GM10248 (cell line): ENCODE measurements at regions of chr1 and their contacts with region 1.

Region 1: GRCh38 chr1:65075123-65075976 is 72.7 kb upstream of the AK4 start:
- DNase-seq: peak; percentile 65
- CTCF ChIP-seq: peak; percentile 76

Region 2: DNA sequence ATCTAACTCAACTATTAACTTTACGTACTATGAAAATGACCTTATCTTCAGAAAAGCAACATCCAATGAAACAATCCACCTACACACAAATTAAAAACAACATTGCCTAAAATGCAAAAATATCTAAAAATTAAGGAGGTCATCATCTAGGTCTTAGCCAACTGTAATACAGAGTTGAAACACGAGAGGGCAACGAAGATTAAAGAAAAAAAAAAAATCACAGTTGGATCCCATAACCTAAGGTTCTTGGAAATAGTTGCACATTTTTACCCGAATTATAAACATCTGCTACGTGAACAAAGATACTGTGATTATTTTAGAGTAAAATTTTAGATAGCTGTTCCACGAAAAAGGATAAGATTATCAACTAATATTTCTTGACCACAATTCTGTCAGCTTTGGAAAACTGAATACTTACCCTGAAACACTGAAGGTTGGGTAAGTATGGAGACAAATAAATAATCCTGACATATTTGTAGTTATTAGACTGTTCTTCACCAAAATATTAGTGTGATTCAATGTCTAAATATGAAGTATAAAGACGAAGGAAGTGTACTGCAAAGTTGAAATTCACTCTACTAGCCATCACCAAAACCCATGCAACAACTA is 15.3 kb before region 1 on chr1:
- CTCF ChIA-PET with region 1: interaction called, 53 read pairs
- POLR2A ChIA-PET with region 1: no interaction called
- DNase-seq: no peak
- CTCF ChIP-seq: peak; percentile 57